ENCODE measurements at regions of chr14 and their contacts with region 1.

Region 1: GRCh38 chr14:62126879-62127478 is 364.8 kb downstream of the SNAPC1 start:
- DNase-seq: peak; percentile 38
- CTCF ChIP-seq: peak; percentile 83

Region 2: GRCh38 chr14:61196792-61197191 is 930.2 kb before region 1 on chr14:
- in situ Hi-C with region 1: no loop called
- DNase-seq: no peak
- CTCF ChIP-seq: no peak

Region 3: GRCh38 chr14:61444215-61444768 is 682.7 kb before region 1 on chr14:
- in situ Hi-C with region 1: no loop called
- DNase-seq: peak; percentile 43
- CTCF ChIP-seq: no peak

Region 4: DNA sequence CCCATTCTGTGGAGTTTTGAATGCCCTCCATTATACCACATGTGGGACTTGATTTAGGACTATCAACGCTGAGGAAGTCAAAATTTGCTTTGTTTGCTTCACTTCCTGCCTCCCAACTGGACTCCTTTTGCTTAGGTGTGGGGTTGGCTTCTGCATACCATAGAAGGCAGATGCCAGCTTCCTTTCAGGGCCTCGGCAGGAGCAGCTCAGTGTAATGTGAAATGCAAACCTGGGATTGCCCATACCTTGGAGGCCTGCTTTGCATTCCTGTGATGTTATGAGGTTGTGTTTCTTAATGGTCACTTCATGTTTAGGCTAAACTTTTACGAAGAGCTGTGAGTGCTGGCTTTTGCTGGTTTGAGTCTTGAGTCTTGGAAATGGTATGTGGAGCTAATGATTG is 222.8 kb before region 1 on chr14:
- in situ Hi-C with region 1: loop called (anchors 10 kb)
- DNase-seq: no peak
- CTCF ChIP-seq: no peak

Region 5: GRCh38 chr14:61963914-61964313 is 163.1 kb before region 1 on chr14:
- in situ Hi-C with region 1: no loop called
- DNase-seq: no peak
- CTCF ChIP-seq: no peak

Region 6: GRCh38 chr14:62251237-62251636 is 124.3 kb after region 1 on chr14:
- in situ Hi-C with region 1: no loop called
- DNase-seq: no peak
- CTCF ChIP-seq: no peak